ENCODE measurements at regions of chrX and their contacts with region 1.

Region 1: DNA sequence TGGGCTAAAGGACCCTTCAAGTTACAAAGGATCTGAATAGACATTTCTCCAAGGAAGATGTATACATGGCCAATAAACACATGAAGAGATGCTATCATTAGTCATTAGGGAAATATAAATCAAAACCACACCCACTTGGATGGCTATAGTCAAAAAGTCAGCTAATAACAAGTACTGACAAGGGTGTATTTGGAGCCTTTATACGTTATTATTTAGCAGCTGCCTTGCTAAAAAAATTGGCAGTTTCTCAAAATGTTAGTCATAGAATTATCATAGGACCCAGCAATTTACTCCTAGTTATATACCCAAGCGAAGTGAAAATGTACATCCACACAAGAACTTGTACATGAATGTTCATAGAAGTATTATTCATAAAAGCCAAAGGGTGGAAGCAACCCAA is 112.7 kb upstream of the DUSP21 start:
- DNase-seq: no peak
- ATAC-seq: no peak
- H3K4me3 ChIP-seq: no peak overlapping the region
- H3K27ac ChIP-seq: no peak overlapping the region
- H3K4me1 ChIP-seq: no peaks in the 10 kb centered on the region
- H3K27me3 ChIP-seq: peaks cover 0 to 38% (median 0%) of the 10 kb centered on the region in 7 donors
- CTCF ChIP-seq: no peak

Region 2: DNA sequence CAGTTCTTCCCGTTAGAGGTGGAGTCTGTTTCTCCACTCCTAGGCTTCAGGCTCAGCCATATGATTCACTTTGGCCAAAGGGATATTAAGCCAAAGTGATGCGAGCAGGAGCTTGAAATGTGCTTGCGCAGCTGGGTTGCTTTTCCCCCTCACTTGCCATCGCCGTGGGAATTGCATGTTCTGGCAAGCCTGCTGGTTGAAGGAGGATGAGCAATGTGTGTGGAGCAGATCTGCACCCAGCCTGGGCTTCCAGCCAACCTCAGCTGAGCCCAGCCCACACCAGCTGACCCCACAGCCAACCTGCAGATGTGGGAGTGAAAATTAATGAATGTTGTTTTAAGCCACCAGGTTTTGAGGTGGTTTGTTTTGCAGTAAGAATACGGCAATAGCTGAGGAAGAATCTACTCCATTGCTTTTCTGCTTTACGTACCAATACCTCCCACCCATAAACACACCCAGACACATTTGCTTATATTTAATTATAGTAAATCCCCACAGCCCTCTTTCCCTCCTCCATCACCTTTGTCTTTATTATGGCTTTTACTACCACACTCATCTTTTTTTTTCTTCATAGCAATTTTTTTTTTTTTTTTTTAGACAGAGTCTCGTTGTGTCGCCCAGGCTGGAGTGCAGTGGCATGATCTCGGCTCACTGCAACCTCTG is 55.7 kb before region 1 on chrX:
- intact Hi-C with region 1: loop called in 1 of 10 experiments (anchors 10 kb)
- DNase-seq: peak; percentile 13 to 26
- ATAC-seq: peak in 2 of 8 donors; percentile 42 to 72
- H3K4me3 ChIP-seq: no peak overlapping the region
- H3K27ac ChIP-seq: no peak overlapping the region
- H3K4me1 ChIP-seq: no peaks in the 10 kb centered on the region
- H3K27me3 ChIP-seq: peaks cover 0 to 36% (median 0%) of the 10 kb centered on the region in 7 donors
- CTCF ChIP-seq: no peak

Region 3: GRCh38 chrX:44690129-44690528 is 41.0 kb before region 1 on chrX:
- intact Hi-C with region 1: loop called in 1 of 10 experiments (anchors 1 kb)
- DNase-seq: no peak
- ATAC-seq: no peak
- H3K4me3 ChIP-seq: no peak overlapping the region
- H3K27ac ChIP-seq: no peak overlapping the region
- H3K4me1 ChIP-seq: no peaks in the 10 kb centered on the region
- H3K27me3 ChIP-seq: peaks cover 0 to 16% (median 0%) of the 10 kb centered on the region in 7 donors
- CTCF ChIP-seq: no peak

Region 4: GRCh38 chrX:44961817-44962607 is 230.9 kb after region 1 on chrX:
- intact Hi-C with region 1: no loop called
- DNase-seq: no peak
- ATAC-seq: no peak
- H3K4me3 ChIP-seq: no peak overlapping the region
- H3K27ac ChIP-seq: peak overlapping the region in 6 of 10 donors; percentile 36 to 63 (median 50)
- H3K4me1 ChIP-seq: peaks cover 0 to 46% (median 31%) of the 10 kb centered on the region in 9 donors
- H3K27me3 ChIP-seq: no peaks in the 10 kb centered on the region
- CTCF ChIP-seq: no peak

Measured in heart right ventricle (tissue), 16 donors.